ENCODE measurements at regions of chr19 and their contacts with region 1.

Region 1: DNA sequence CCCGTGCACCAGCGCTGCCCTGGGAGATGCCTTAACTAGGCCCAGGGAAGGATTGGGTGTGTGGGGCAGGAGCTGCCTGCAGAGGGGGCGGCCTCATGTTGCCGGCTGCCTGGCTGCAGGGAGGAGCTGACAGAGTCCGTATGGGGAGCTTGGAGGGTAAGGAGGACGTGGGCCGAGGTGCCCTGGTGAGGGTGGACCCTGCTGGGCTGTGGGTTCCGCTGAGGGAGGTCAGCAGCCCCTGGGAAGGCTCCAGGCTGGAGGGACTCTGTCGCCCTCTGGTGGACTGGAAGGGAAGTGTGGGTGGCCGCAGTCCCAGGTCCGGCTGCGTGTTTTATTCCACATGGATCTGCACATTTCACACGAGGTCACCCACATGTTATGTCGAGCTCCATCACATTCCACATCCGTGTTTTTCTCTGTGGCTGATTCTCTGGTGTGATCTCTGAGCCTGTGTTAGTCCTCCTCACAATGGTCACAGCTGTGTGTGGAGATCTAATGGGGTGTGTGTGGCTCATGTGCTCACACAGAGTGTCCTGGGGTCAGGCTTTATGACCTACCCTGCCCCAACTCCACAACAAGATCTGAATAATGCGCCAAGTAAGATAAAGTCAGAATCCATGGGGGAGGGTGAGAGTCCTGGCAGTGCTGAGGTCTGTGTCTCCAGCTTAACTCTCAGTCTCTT is 1.8 kb upstream of the CEACAM8 start:
- DNase-seq: peak; percentile 68
- H3K4me3 Mint-ChIP-seq: no peak overlapping the region
- H3K27ac Mint-ChIP-seq: no peak overlapping the region
- H3K4me1 Mint-ChIP-seq: no peaks in the 10 kb centered on the region
- H3K27me3 Mint-ChIP-seq: peaks cover 93% of the 10 kb centered on the region
- CTCF ChIP-seq: peak; percentile 99

Region 2: DNA sequence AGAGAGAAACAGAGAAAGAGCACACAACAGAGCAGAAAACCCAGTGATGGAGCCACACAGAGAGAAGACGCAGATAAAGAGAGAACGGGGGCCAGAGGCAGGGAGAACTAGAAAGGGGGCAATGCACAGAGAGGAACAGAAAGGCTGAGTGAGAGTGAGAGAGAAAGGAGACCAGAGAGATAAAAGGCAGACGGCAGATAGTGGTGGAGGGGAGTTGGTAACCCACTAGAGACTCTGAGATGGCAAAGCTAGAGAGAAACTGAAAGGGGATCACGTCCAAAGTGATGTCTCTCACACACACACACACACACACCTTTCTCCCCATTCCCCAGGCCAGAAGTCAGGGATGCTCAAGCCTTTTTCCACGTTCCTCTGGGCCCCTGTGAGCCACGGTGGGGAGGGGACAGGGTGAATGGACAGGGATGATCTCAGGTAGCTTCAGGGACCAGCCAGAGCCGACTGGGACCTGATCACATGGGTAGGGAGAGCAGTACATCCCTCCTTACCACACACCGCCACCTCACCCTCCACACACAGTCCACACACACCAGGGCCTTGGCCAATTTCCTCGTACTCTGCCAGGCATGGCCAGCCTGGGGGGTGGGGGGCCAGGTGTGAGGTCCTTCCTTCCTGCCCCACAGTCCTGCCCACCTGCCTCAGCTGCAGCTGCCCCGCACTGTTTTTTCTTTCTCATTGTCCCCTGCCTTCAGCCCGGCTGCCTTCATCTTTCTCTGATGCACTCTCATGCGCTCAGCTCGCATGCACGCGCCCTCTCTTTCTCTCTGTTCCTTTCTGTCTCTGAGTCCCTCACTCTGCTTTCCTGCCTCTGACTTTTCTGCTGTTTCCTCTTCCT is 441.8 kb before region 1 on chr19:
- CTCF ChIA-PET with region 1: no interaction called
- intact Hi-C with region 1: no loop called
- DNase-seq: peak; percentile 20
- H3K4me3 Mint-ChIP-seq: no peak overlapping the region
- H3K27ac Mint-ChIP-seq: no peak overlapping the region
- H3K4me1 Mint-ChIP-seq: peaks cover 31% of the 10 kb centered on the region
- H3K27me3 Mint-ChIP-seq: peaks cover 73% of the 10 kb centered on the region
- CTCF ChIP-seq: no peak

Region 3: GRCh38 chr19:42433503-42434260 is 162.8 kb before region 1 on chr19:
- CTCF ChIA-PET with region 1: interaction called, 7 read pairs
- intact Hi-C with region 1: loop called (anchors 5 kb)
- DNase-seq: peak; percentile 88
- H3K4me3 Mint-ChIP-seq: no peak overlapping the region
- H3K27ac Mint-ChIP-seq: no peak overlapping the region
- H3K4me1 Mint-ChIP-seq: peaks cover 19% of the 10 kb centered on the region
- H3K27me3 Mint-ChIP-seq: no peaks in the 10 kb centered on the region
- CTCF ChIP-seq: peak; percentile 84

Region 4: DNA sequence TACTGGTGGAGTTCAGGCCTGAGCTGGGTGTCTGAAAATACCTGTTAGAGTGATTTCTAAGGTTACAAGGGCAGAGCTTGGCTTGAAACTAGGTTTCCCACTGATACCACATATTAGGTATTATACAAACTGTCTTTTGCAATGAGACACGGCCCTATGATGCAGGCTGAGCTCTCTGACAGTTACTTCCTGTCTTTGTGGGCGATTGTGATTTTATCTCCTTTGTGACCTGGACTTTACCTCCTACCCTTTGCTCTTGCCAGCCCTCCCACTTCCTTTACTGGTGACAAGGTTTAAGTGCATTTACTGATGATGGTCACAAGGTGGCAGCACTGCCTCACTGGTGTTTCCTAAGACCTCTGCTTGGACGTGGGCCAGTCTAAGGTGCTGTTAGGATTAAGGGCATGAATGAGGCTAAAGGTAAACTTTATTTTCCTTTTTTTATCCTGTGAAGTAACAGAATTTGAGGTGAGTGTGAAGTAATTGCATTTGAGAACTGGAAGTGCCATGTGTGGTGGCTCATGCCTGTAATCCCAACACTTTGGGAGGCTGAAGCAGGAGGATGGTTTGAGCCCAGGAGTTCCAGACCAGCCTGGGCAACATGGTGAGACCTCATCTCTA is 146.1 kb before region 1 on chr19:
- CTCF ChIA-PET with region 1: interaction called, 8 read pairs
- intact Hi-C with region 1: loop called (anchors 2 kb)
- DNase-seq: peak; percentile 85
- H3K4me3 Mint-ChIP-seq: no peak overlapping the region
- H3K27ac Mint-ChIP-seq: no peak overlapping the region
- H3K4me1 Mint-ChIP-seq: peaks cover 16% of the 10 kb centered on the region
- H3K27me3 Mint-ChIP-seq: no peaks in the 10 kb centered on the region
- CTCF ChIP-seq: peak; percentile 98

Region 5: GRCh38 chr19:42540071-42540553 is 56.4 kb before region 1 on chr19:
- CTCF ChIA-PET with region 1: no interaction called
- intact Hi-C with region 1: no loop called
- DNase-seq: no peak
- H3K4me3 Mint-ChIP-seq: no peak overlapping the region
- H3K27ac Mint-ChIP-seq: no peak overlapping the region
- H3K4me1 Mint-ChIP-seq: no peaks in the 10 kb centered on the region
- H3K27me3 Mint-ChIP-seq: no peaks in the 10 kb centered on the region
- CTCF ChIP-seq: no peak

Region 6: GRCh38 chr19:42553292-42554045 is 43.1 kb before region 1 on chr19:
- CTCF ChIA-PET with region 1: no interaction called
- intact Hi-C with region 1: no loop called
- DNase-seq: no peak
- H3K4me3 Mint-ChIP-seq: no peak overlapping the region
- H3K27ac Mint-ChIP-seq: no peak overlapping the region
- H3K4me1 Mint-ChIP-seq: peaks cover 7% of the 10 kb centered on the region
- H3K27me3 Mint-ChIP-seq: peaks cover 91% of the 10 kb centered on the region
- CTCF ChIP-seq: no peak

Region 7: GRCh38 chr19:42563352-42564210 is 33.0 kb before region 1 on chr19:
- CTCF ChIA-PET with region 1: interaction called, 7 read pairs
- intact Hi-C with region 1: loop called (anchors 1 kb)
- DNase-seq: peak; percentile 54
- H3K4me3 Mint-ChIP-seq: no peak overlapping the region
- H3K27ac Mint-ChIP-seq: no peak overlapping the region
- H3K4me1 Mint-ChIP-seq: no peaks in the 10 kb centered on the region
- H3K27me3 Mint-ChIP-seq: peaks cover 70% of the 10 kb centered on the region
- CTCF ChIP-seq: peak; percentile 20

Region 8: GRCh38 chr19:42573642-42574041 is 22.9 kb before region 1 on chr19:
- CTCF ChIA-PET with region 1: no interaction called
- intact Hi-C with region 1: no loop called
- DNase-seq: no peak
- H3K4me3 Mint-ChIP-seq: no peak overlapping the region
- H3K27ac Mint-ChIP-seq: no peak overlapping the region
- H3K4me1 Mint-ChIP-seq: peaks cover 7% of the 10 kb centered on the region
- H3K27me3 Mint-ChIP-seq: peaks cover 68% of the 10 kb centered on the region
- CTCF ChIP-seq: no peak

Measured in Calu3 (cell line).